CD4-positive, alpha-beta T cell (primary cell): ENCODE measurements at regions of chr11 and their contacts with region 1.

Region 1: DNA sequence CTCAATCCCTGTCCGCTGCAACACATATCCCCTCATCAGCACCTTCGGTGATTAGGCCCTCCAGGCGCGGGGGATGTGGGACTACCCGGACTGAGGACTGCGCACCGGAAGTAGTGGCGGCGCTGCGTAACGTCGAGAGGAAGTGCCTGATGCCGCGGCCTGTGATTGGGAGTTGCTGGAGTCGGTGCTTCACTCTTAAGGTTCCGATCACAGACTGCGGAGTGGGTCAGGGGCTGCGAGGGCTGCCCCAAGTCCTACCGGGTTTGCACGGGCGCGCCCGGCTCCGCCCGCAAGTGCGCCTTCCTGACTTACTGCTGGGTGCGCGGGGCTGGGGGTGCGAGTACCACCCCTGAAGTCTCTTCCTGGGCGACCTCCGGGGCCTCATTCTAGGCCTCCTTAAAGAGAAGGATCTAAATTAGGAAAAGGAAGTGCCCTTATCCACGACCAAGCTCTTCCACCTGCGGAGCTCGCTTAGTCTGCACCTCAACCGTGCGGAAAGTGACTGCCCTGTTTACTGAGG is at the start of gene ALKBH3:
- DNase-seq: peak; percentile 86 to 96 (median 90)
- ATAC-seq: peak; percentile 98
- H3K4me3 ChIP-seq: peak within 1 kb of the TSS; percentile 81
- H3K4me3 Mint-ChIP-seq: peak within 1 kb of the TSS; percentile 91
- H3K27ac ChIP-seq: peak within 1 kb of the TSS in 1 of 2 donors; percentile 39
- H3K27ac Mint-ChIP-seq: peak within 1 kb of the TSS; percentile 71
- H3K4me1 ChIP-seq: peaks cover 15% of the 10 kb centered on the region
- H3K4me1 Mint-ChIP-seq: peaks cover 26% of the 10 kb centered on the region
- H3K27me3 ChIP-seq: peaks cover 11 to 22% of the 10 kb centered on the region in 2 experiments
- H3K27me3 Mint-ChIP-seq: peaks cover 23% of the 10 kb centered on the region
- CTCF ChIP-seq: no peak
- total RNA-seq, gene ALKBH3: 16.7 to 17.2 TPM

Region 2: DNA sequence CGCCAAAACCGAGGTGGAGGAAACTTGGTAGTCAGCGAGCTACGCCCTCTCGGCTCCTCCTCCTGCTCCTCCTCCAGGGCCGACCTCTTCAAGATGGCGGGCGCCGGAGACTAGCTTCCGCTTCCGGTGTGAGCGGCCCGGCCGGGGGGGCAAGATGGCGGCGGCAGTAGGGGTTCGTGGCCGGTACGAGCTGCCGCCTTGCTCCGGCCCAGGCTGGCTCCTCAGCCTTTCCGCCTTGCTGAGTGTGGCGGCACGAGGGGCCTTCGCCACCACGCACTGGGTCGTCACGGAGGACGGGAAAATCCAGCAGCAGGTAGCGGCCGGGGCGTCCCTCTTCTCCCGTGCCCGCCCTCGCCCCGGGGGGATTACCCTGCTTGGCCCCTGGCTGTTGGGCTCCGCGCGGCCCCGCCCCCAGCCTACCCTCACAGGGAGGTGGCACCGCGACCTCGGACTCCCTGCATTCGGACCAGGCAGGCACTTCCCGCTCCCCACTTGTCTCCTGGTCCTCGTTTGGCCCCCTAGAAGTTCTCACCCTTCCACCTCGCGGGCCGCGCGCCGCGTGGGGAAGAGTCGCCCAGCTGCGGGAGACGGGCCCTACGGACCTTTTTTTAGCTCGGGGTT is 521.8 kb before region 1 on chr11 and contains the start of gene TTC17:
- CTCF ChIA-PET with region 1: no interaction called
- POLR2A ChIA-PET with region 1: no interaction called
- intact Hi-C with region 1: loop called in 1 of 2 experiments (anchors 2 kb)
- DNase-seq: peak; percentile 86 to 95 (median 90)
- ATAC-seq: peak; percentile 97
- H3K4me3 ChIP-seq: peak within 1 kb of the TSS; percentile 95
- H3K4me3 Mint-ChIP-seq: peak within 1 kb of the TSS; percentile 98
- H3K27ac ChIP-seq: peak within 1 kb of the TSS; percentile 83 to 95
- H3K27ac Mint-ChIP-seq: peak within 1 kb of the TSS; percentile 94
- H3K4me1 ChIP-seq: peaks cover 24% of the 10 kb centered on the region
- H3K4me1 Mint-ChIP-seq: peaks cover 61% of the 10 kb centered on the region
- H3K27me3 ChIP-seq: no peaks in the 10 kb centered on the region
- H3K27me3 Mint-ChIP-seq: no peaks in the 10 kb centered on the region
- CTCF ChIP-seq: no peak
- total RNA-seq, gene TTC17: 72.9 to 77.3 TPM

Region 3: GRCh38 chr11:43680521-43681400 is 199.9 kb before region 1 on chr11 and contains the start of gene HSD17B12:
- CTCF ChIA-PET with region 1: no interaction called
- POLR2A ChIA-PET with region 1: interaction called, 4 read pairs
- intact Hi-C with region 1: loop called (anchors 2 kb)
- DNase-seq: peak; percentile 95 to 99 (median 98)
- ATAC-seq: peak; percentile 92
- H3K4me3 ChIP-seq: peak within 1 kb of the TSS; percentile 91
- H3K4me3 Mint-ChIP-seq: peak within 1 kb of the TSS; percentile 96
- H3K27ac ChIP-seq: peak within 1 kb of the TSS; percentile 67 to 93
- H3K27ac Mint-ChIP-seq: peak within 1 kb of the TSS; percentile 96
- H3K4me1 ChIP-seq: peaks cover 18% of the 10 kb centered on the region
- H3K4me1 Mint-ChIP-seq: peaks cover 48% of the 10 kb centered on the region
- H3K27me3 ChIP-seq: no peaks in the 10 kb centered on the region
- H3K27me3 Mint-ChIP-seq: no peaks in the 10 kb centered on the region
- CTCF ChIP-seq: no peak
- total RNA-seq, gene HSD17B12: 16.1 to 16.3 TPM

Region 4: DNA sequence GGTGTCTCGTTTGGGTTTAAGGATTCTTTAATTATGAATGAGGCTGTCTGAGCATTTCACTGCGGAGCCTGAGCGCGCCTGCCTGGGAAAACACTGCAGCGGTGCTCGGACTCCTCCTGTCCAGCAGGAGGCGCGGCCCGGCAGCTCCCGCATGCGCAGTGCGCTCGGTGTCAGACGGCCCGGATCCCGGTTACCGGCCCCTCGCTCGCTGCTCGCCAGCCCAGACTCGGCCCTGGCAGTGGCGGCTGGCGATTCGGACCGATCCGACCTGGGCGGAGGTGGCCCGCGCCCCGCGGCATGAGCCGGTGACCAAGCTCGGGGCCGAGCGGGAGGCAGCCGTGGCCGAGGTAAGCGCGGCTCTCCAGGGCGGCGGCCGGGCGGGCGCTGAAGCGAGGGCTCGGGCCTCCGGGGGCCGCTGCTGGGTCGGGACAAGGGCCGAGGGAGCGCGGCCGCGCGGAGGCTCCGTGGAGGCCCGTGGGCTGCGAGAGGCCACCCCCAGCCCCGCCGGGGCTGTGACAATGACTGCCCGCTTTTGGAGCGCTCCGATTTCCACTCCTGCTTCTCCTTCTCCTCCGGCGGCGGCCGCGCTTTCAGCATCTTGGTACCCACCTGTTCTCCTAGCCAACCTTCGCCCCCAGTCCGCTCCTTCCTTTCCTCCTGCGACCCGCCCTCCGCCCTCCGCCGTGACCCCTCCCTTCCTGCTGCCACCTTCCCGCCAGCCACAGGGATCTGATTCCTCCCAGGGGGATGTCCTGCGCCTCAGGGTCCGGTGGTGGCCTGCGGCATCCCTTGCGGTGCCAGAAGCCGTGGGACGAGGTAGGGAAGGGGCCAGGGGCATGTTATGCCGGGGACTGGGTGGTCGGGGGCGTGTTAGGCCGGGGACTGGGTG is 215.1 kb after region 1 on chr11 and contains the start of gene EXT2:
- CTCF ChIA-PET with region 1: no interaction called
- POLR2A ChIA-PET with region 1: no interaction called
- intact Hi-C with region 1: loop called in 1 of 2 experiments (anchors 10 kb)
- DNase-seq: peak; percentile 75 to 92 (median 82)
- ATAC-seq: peak; percentile 93
- H3K4me3 ChIP-seq: peak within 1 kb of the TSS; percentile 82
- H3K4me3 Mint-ChIP-seq: peak within 1 kb of the TSS; percentile 88
- H3K27ac ChIP-seq: no peak within 1 kb of the TSS
- H3K27ac Mint-ChIP-seq: peak within 1 kb of the TSS; percentile 57
- H3K4me1 ChIP-seq: peaks cover 18% of the 10 kb centered on the region
- H3K4me1 Mint-ChIP-seq: peaks cover 42% of the 10 kb centered on the region
- H3K27me3 ChIP-seq: no peaks in the 10 kb centered on the region
- H3K27me3 Mint-ChIP-seq: no peaks in the 10 kb centered on the region
- CTCF ChIP-seq: peak; percentile 94
- total RNA-seq, gene EXT2: 17.1 to 17.5 TPM

Region 5: DNA sequence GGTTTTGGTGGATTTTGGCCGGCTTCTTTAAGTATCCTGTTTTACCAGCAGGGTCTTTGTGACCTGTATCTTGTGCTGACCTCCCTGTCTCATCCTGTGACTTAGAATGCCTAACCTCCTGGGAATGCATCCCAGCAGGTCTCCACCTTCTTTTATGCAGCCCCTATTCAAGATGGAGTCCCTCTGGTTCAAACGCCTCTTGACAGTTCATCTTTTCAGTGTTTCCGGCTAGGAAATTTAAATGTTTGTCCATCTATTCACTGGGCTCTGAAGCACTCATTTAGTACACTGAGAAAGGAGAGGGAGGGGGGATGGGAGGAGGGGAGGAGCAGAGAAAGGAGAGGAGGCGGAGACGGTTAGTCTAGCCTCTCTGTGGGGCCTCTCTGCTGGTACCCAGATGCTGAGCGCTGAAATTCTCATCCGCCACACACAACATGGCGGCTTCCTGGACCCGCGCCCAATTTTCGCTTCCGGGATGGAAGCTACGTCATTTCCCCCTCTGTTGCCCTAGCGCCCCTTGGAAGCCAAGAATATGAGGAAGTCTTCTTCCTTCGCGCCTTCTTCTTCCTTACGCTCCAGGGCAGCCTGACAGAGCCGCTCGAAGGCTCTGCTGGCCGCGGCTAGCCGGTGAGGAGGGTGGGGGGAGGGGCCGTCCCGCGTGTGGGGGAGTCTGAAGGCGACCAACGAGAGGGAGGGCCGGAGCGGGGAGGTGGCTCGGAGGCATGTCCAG is 1474.4 kb after region 1 on chr11:
- CTCF ChIA-PET with region 1: no interaction called
- POLR2A ChIA-PET with region 1: no interaction called
- intact Hi-C with region 1: loop called in 1 of 2 experiments (anchors 5 kb)
- DNase-seq: peak; percentile 82 to 95 (median 90)
- ATAC-seq: peak; percentile 92
- H3K4me3 ChIP-seq: peak overlapping the region; percentile 79
- H3K4me3 Mint-ChIP-seq: peak overlapping the region; percentile 84
- H3K27ac ChIP-seq: peak overlapping the region; percentile 43 to 52
- H3K27ac Mint-ChIP-seq: peak overlapping the region; percentile 57
- H3K4me1 ChIP-seq: peaks cover 17% of the 10 kb centered on the region
- H3K4me1 Mint-ChIP-seq: peaks cover 22% of the 10 kb centered on the region
- H3K27me3 ChIP-seq: no peaks in the 10 kb centered on the region
- H3K27me3 Mint-ChIP-seq: peaks cover 9% of the 10 kb centered on the region
- CTCF ChIP-seq: no peak